ENCODE measurements at regions of chr12 and their contacts with region 1.

Region 1: GRCh38 chr12:127485528-127485927 is 781.4 kb upstream of the TMEM132C start:
- DNase-seq: peak; percentile 98
- ATAC-seq: peak; percentile 80
- H3K4me3 ChIP-seq: no peak overlapping the region
- H3K27ac ChIP-seq: peak overlapping the region; percentile 79
- H3K4me1 ChIP-seq: peaks cover 32% of the 10 kb centered on the region
- H3K27me3 ChIP-seq: no peaks in the 10 kb centered on the region
- CTCF ChIP-seq: peak; percentile 81

Region 2: GRCh38 chr12:127559349-127560040 is 74.0 kb after region 1 on chr12:
- CTCF ChIA-PET with region 1: interaction called, 3 read pairs
- POLR2A ChIA-PET with region 1: no interaction called
- intact Hi-C with region 1: loop called (anchors 1 kb)
- DNase-seq: peak; percentile 98
- ATAC-seq: peak; percentile 95
- H3K4me3 ChIP-seq: 0 out of 2 replicates have a peak overlapping the region, but pooled peaks have one; percentile 15
- H3K27ac ChIP-seq: peak overlapping the region; percentile 94
- H3K4me1 ChIP-seq: peaks cover 34% of the 10 kb centered on the region
- H3K27me3 ChIP-seq: no peaks in the 10 kb centered on the region
- CTCF ChIP-seq: peak; percentile 96

Region 3: GRCh38 chr12:127677537-127678131 is 192.1 kb after region 1 on chr12:
- CTCF ChIA-PET with region 1: interaction called, 19 read pairs
- POLR2A ChIA-PET with region 1: no interaction called
- intact Hi-C with region 1: loop called (anchors 1 kb)
- DNase-seq: peak; percentile 97
- ATAC-seq: peak; percentile 93
- H3K4me3 ChIP-seq: no peak overlapping the region
- H3K27ac ChIP-seq: no peak overlapping the region
- H3K4me1 ChIP-seq: peaks cover 6% of the 10 kb centered on the region; the same call in 1 of the 2 replicates
- H3K27me3 ChIP-seq: no peaks in the 10 kb centered on the region
- CTCF ChIP-seq: peak; percentile 96

Region 4: GRCh38 chr12:127690161-127690560 is 204.6 kb after region 1 on chr12:
- CTCF ChIA-PET with region 1: no interaction called
- POLR2A ChIA-PET with region 1: no interaction called
- intact Hi-C with region 1: loop called (anchors 5 kb)
- DNase-seq: peak; percentile 66
- ATAC-seq: no peak
- H3K4me3 ChIP-seq: no peak overlapping the region
- H3K27ac ChIP-seq: no peak overlapping the region
- H3K4me1 ChIP-seq: 0 out of 2 replicates have a peak, but pooled peaks cover 5% of the 10 kb centered on the region
- H3K27me3 ChIP-seq: peaks cover 57% of the 10 kb centered on the region
- CTCF ChIP-seq: peak; percentile 79

Region 5: GRCh38 chr12:128069359-128069997 is 584.0 kb after region 1 on chr12:
- CTCF ChIA-PET with region 1: no interaction called
- POLR2A ChIA-PET with region 1: no interaction called
- intact Hi-C with region 1: loop called (anchors 1 kb)
- DNase-seq: peak; percentile 92
- ATAC-seq: peak; percentile 75
- H3K4me3 ChIP-seq: no peak overlapping the region
- H3K27ac ChIP-seq: no peak overlapping the region
- H3K4me1 ChIP-seq: no peaks in the 10 kb centered on the region
- H3K27me3 ChIP-seq: peaks cover 57% of the 10 kb centered on the region
- CTCF ChIP-seq: peak; percentile 95